Activated T-helper 2 cell treated with anti-CD3 and anti-CD28 coated beads, Interferon-gamma antibody, Interleukin-2, Interleukin-4, amounts not matched to agents 10 μg/mL and 5 μg/mL and 100 μg/mL, durations not matched to agents 14 hours and 24 hours and 36 hours (primary cell): ENCODE measurements at regions of chr11 and their contacts with region 1.

Region 1: GRCh38 chr11:88357323-88358039 is 19.9 kb upstream of the CTSC start:
- DNase-seq: no peak
- H3K4me3 Mint-ChIP-seq: peak overlapping the region; percentile 28
- H3K27ac Mint-ChIP-seq: peak overlapping the region; percentile 74
- H3K4me1 Mint-ChIP-seq: peaks cover 44% of the 10 kb centered on the region
- H3K27me3 Mint-ChIP-seq: no peaks in the 10 kb centered on the region

Region 2: DNA sequence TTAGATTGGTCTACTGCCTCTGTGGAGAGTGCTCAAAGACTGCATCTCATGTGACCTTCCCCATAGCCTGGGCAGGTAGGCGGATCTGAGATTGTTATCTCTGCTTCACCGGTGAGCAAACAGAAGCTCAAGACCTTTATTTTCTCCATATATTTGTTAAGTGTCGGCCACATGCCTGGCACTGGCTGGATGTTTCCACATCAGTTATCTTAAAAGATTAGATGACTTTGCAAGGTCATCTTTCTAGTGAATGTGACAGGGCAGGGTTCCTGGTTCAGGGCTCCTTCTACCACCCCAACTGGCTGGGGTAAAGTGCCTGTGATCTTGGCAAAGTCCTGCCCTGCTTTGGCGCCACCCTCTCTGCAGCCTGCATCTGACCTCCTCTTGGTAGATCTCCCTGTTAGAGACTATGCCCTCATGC is 1857.8 kb before region 1 on chr11:
- intact Hi-C with region 1: loop called (anchors 5 kb)
- DNase-seq: no peak
- H3K4me3 Mint-ChIP-seq: no peak overlapping the region
- H3K27ac Mint-ChIP-seq: no peak overlapping the region
- H3K4me1 Mint-ChIP-seq: peaks cover 11% of the 10 kb centered on the region
- H3K27me3 Mint-ChIP-seq: peaks cover 4% of the 10 kb centered on the region

Region 3: DNA sequence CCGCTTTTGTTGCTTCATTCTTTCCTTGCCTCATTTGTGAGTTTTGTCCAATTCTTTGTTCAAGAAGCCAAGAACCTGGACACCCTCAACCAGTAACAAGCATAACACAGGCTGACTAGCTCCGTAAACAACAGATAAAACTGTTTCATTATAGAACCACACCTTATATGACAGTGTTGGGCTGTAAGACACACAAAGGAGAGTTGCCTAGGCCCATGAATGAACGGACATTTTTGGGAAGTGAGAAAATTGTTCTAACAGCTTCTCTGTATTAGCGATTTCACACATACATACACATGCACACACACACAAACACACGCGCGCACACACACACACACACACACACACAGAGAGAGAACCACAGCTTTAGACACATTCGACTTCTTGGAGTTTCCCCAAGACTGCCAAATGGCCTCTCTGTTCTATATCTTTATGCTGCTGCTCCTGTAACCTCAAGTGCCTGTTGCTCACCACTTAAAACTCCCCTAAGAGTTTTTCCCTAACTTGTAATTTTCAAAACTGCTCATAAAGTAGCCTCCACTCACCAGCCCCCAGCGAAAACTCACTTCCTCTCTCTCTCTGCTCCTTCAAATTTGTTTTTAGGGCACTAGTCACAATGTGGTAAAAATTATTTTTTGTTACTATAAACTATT is 55.9 kb before region 1 on chr11:
- intact Hi-C with region 1: loop called (anchors 1 kb)
- DNase-seq: no peak
- H3K4me3 Mint-ChIP-seq: no peak overlapping the region
- H3K27ac Mint-ChIP-seq: peak overlapping the region; percentile 77
- H3K4me1 Mint-ChIP-seq: peaks cover 37% of the 10 kb centered on the region
- H3K27me3 Mint-ChIP-seq: no peaks in the 10 kb centered on the region

Region 4: DNA sequence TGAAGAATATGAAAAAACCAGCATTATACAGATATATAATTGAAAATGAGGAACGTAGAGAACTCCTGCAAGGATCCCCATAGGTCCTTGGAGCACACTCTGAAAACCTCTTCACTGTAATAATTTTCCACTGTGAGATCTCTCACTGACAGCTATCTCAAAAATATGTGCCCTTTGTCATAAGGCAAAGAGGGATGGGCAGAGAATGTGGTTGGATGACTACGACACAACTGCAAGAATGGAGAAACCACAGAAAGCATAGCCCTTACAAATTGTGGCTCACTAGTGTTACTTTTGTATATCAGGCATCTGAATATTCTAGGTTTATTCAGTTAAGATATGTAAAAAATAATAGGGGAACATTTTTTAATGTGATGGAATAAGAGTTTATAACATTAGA is 12.1 kb before region 1 on chr11:
- intact Hi-C with region 1: loop called (anchors 1 kb)
- DNase-seq: no peak
- H3K4me3 Mint-ChIP-seq: no peak overlapping the region
- H3K27ac Mint-ChIP-seq: no peak overlapping the region
- H3K4me1 Mint-ChIP-seq: peaks cover 41% of the 10 kb centered on the region
- H3K27me3 Mint-ChIP-seq: no peaks in the 10 kb centered on the region

Region 5: DNA sequence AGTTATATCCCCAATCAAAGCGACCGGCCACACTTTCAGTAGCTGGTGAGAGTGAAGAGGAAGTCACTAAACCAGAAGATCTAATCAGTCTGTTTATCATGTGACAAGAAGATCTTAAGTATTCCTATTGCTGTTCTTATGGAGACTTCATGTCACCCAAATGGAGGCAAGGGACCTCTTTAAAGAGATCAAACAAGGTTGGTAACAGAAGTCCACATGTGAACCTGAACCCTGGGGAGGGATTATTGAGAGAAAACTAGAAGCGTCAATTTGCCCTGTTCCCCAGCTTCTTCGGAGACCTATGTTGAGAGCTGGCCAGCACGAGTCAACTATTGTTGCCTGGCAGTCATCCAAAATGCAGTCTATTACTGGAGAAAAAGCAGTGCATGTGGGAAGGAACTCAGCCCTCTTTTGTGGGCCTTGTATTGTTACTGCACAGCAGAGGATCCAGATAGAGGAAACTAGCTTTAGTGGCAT is 56.9 kb after region 1 on chr11:
- intact Hi-C with region 1: loop called (anchors 1 kb)
- DNase-seq: no peak
- H3K4me3 Mint-ChIP-seq: no peak overlapping the region
- H3K27ac Mint-ChIP-seq: peak overlapping the region; percentile 71
- H3K4me1 Mint-ChIP-seq: peaks cover 50% of the 10 kb centered on the region
- H3K27me3 Mint-ChIP-seq: no peaks in the 10 kb centered on the region

Region 6: GRCh38 chr11:88535916-88536547 is 178.6 kb after region 1 on chr11:
- intact Hi-C with region 1: loop called (anchors 5 kb)
- DNase-seq: no peak
- H3K4me3 Mint-ChIP-seq: no peak overlapping the region
- H3K27ac Mint-ChIP-seq: peak overlapping the region; percentile 16
- H3K4me1 Mint-ChIP-seq: peaks cover 20% of the 10 kb centered on the region
- H3K27me3 Mint-ChIP-seq: peaks cover 5% of the 10 kb centered on the region